Activated CD4-positive, alpha-beta memory T cell treated with anti-CD3 and anti-CD28 coated beads for 36 hours (primary cell): ENCODE measurements at regions of chr17 and their contacts with region 1.

Region 1: GRCh38 chr17:42997984-42998938 is at the start of gene RPL27:
- DNase-seq: peak; percentile 99
- H3K4me3 Mint-ChIP-seq: peak within 1 kb of the TSS; percentile 98
- H3K27ac Mint-ChIP-seq: peak within 1 kb of the TSS; percentile 98
- H3K4me1 Mint-ChIP-seq: peaks cover 30% of the 10 kb centered on the region
- H3K27me3 Mint-ChIP-seq: no peaks in the 10 kb centered on the region
- total RNA-seq, gene RPL27: 1,552 to 1,589 TPM

Region 2: DNA sequence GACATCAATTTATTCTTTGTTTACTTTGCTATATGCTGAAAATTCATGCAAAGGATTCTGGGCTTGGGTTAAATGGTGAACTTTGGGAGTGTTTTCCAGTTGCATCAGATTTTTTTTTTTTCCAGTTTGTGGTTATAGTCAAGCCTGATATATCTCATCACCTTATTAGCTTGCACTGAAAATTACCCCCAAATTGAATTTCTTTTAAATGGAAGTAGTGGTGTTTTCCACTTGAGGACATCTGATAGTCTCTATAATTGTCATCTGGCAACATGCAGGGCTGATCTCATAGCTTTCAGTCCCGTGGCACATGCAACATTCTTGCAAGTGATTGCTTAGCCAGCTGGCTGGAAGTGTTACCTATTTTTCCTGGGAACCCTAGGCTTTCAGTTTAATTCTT is 1984.7 kb before region 1 on chr17:
- CTCF ChIA-PET with region 1: no interaction called
- POLR2A ChIA-PET with region 1: no interaction called
- intact Hi-C with region 1: no loop called
- DNase-seq: no peak
- H3K4me3 Mint-ChIP-seq: no peak overlapping the region
- H3K27ac Mint-ChIP-seq: no peak overlapping the region
- H3K4me1 Mint-ChIP-seq: no peaks in the 10 kb centered on the region
- H3K27me3 Mint-ChIP-seq: no peaks in the 10 kb centered on the region

Region 3: DNA sequence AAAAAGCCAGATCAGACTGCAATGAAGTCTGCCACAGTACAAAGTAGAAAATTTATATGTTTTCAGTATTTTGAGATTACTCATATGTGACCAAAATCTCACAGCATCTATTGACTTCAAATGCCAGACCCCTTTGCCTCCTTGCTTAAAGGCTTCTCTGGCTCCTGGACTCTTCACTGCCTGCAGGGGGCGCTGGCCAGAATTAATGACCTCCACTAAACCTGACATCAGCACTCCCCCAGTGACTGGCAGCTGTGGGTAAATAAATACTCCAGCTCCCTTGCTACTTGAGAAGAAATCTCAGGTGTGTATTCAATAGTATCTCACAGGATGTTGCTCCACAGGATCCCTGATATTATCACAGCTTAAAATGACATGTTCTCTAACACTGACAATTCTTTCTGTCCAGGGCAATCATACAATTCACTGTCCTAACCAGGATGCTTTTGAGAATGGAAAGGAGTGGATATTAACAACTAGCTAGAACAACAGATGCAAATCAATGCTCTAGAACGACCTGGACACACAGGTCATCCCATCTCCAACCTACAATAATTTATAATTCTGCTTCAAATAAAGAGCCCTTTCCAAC is 178.2 kb before region 1 on chr17:
- CTCF ChIA-PET with region 1: interaction called, 4 read pairs
- POLR2A ChIA-PET with region 1: interaction called, 10 read pairs
- intact Hi-C with region 1: no loop called
- DNase-seq: peak; percentile 79
- H3K4me3 Mint-ChIP-seq: no peak overlapping the region
- H3K27ac Mint-ChIP-seq: no peak overlapping the region
- H3K4me1 Mint-ChIP-seq: peaks cover 24% of the 10 kb centered on the region
- H3K27me3 Mint-ChIP-seq: no peaks in the 10 kb centered on the region

Region 4: GRCh38 chr17:42843358-42843934 is 154.8 kb before region 1 on chr17:
- CTCF ChIA-PET with region 1: interaction called, 25 read pairs
- POLR2A ChIA-PET with region 1: interaction called, 3 read pairs
- intact Hi-C with region 1: no loop called
- DNase-seq: peak; percentile 17
- H3K4me3 Mint-ChIP-seq: no peak overlapping the region
- H3K27ac Mint-ChIP-seq: no peak overlapping the region
- H3K4me1 Mint-ChIP-seq: peaks cover 16% of the 10 kb centered on the region
- H3K27me3 Mint-ChIP-seq: no peaks in the 10 kb centered on the region

Region 5: GRCh38 chr17:42908872-42909700 is 89.2 kb before region 1 on chr17:
- CTCF ChIA-PET with region 1: no interaction called
- POLR2A ChIA-PET with region 1: no interaction called
- intact Hi-C with region 1: no loop called
- DNase-seq: no peak
- H3K4me3 Mint-ChIP-seq: no peak overlapping the region
- H3K27ac Mint-ChIP-seq: no peak overlapping the region
- H3K4me1 Mint-ChIP-seq: no peaks in the 10 kb centered on the region
- H3K27me3 Mint-ChIP-seq: peaks cover 9% of the 10 kb centered on the region

Region 6: DNA sequence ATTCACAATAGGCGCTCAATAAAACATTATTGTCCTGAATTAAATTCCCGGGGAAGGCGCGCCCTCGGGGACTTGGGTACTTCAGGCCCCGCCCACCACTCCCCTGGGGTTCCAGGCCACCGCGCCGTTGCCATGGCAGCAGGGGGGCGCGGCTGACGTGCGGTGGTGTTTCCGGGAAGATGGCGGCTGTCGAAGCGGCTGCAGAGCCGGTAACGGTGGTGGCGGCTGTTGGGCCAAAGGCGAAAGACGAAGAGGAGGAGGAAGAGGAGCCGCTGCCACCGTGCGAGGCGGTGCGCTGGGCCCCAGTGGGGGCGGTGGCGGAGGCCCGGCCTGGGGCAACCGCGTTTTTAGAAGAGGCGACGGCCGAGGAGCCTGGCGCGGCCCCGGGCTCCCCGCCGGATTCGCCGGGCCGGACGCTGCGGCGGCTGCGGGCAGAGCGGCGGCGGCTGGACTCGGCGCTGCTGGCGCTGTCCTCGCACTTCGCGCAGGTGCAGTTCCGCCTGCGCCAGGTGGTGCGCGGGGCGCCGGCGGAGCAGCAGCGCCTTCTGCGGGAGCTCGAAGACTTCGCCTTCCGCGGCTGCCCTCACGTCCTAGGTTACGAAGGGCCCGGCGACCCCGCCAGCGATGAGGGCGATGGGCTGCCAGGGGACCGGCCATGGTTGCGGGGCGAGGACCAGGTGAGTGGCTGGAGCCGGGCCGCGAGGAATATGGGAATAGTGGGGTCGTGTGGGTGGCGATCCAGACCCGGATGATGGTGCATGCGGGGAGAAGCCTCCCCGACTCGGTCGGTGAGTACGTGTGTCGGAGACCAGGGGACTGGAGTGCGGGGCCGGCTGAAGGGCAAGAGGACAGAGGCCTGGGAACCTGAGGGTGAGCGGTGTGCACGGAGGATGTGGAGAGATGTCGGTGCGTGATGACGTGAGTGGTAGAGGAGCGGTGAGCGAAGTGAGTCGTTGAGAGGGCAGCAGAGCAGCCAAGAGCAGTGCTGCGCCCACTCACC is 17.6 kb before region 1 on chr17 and contains the start of gene RUNDC1:
- CTCF ChIA-PET with region 1: interaction called, 17 read pairs
- POLR2A ChIA-PET with region 1: interaction called, 7 read pairs
- intact Hi-C with region 1: loop called (anchors 1 kb)
- DNase-seq: peak; percentile 94
- H3K4me3 Mint-ChIP-seq: peak within 1 kb of the TSS; percentile 99
- H3K27ac Mint-ChIP-seq: peak within 1 kb of the TSS; percentile 88
- H3K4me1 Mint-ChIP-seq: peaks cover 28% of the 10 kb centered on the region
- H3K27me3 Mint-ChIP-seq: no peaks in the 10 kb centered on the region
- total RNA-seq, gene RUNDC1: 10.0 to 11.5 TPM

Region 7: DNA sequence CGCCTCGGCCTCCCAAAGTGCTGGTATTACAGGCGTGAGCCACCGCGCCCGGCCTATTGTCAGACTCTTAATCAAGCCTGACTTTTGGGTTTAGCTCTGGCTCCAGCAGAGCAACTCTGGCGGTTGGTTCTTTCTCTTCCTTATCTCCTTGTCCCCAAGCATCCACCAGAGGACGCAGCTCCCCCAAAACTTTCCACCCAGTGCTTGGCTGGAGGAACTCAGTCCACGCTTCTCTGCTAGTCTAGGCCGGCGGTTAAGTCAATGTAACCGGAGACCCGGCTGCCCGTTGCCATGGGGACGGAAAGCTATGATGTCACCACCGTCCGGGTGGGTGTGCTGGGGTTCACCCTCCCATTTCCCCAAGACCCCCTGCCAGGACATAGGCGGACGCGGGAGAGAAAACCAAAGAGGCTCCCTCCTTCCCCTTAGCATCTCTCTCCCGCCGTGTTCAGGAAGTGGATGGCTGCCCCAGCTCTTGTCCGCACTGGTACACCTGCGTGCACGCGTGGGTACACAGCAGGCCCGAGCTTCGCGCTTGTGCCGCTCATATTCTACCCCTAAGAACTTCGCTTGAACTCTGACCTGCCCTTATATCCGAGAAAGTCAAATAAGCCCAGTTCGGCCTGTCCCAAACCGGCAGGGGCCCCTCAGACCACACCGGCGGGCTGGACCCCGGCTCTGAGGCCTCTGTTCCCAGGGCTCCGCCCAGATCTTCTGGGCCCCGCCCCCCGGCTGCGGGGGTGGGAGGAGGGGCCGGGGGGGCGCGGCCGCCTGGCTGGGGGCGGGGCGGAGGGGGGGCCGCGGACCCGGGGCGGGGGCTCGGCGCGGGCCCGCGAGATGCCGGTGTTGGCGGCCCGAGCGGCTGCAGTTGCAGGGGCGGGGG is 26.4 kb after region 1 on chr17 and contains the start of gene RND2:
- CTCF ChIA-PET with region 1: interaction called, 8 read pairs
- POLR2A ChIA-PET with region 1: interaction called, 13 read pairs
- intact Hi-C with region 1: no loop called
- DNase-seq: peak; percentile 88
- H3K4me3 Mint-ChIP-seq: peak within 1 kb of the TSS; percentile 74
- H3K27ac Mint-ChIP-seq: peak within 1 kb of the TSS; percentile 21
- H3K4me1 Mint-ChIP-seq: peaks cover 21% of the 10 kb centered on the region
- H3K27me3 Mint-ChIP-seq: no peaks in the 10 kb centered on the region
- total RNA-seq, gene RND2: 0.07 TPM in 1 of 2 experiments, not detected in the other

Region 8: DNA sequence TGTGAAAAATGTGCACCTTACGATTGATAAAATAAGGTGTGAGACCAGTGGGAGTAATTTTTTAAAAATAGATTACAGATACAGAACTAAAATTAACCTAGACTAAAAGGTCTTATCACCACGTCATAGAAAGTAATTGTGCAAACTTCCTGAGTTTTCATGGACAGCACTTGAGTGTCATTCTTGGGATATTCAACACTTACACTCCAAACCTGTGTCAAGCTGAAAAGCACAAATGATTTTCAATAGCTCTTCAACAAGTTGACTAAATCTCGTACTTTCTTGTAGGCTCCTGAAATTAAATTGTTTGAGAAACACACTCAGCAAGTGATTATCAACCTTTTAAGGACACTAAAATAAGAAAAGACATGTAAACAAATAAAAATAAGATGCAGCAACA is 106.4 kb after region 1 on chr17:
- CTCF ChIA-PET with region 1: no interaction called
- POLR2A ChIA-PET with region 1: no interaction called
- intact Hi-C with region 1: no loop called
- DNase-seq: no peak
- H3K4me3 Mint-ChIP-seq: no peak overlapping the region
- H3K27ac Mint-ChIP-seq: no peak overlapping the region
- H3K4me1 Mint-ChIP-seq: no peaks in the 10 kb centered on the region
- H3K27me3 Mint-ChIP-seq: no peaks in the 10 kb centered on the region

Region 9: DNA sequence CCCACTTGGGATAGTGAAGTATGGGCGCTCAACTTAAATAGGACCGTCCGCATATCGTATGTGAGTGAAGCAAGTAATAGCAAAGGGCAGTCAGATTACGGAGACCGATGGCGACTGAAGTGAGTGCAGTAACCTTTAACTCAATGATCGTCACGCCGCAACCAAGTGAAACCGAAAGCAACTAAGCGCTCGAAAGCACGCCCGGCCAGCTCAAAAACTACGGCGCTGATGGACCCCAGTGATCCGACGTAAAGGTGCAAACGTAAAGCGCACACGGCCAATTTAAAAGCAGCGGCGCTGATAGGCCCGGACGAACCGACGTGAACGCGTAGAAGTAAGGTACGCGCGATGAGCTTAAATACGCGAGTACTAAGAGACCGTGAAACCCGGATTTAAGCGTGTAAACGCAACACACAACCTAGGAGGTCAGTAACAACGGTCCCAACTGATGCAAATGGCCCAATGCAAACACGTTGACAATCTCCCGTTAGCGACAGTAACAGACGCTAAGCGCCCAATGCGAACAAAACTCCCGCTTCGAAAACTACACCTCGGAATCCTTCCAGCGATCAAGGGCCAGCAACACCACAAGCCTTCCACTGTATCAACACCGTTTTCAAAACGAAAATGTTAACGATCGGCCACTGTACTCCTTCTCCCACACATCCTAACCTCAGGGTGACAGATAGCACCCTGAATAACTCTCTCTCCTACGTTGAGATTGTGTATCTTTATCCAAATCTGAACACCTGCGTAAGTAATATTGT is 362.7 kb after region 1 on chr17:
- CTCF ChIA-PET with region 1: no interaction called
- POLR2A ChIA-PET with region 1: interaction called, 13 read pairs
- intact Hi-C with region 1: no loop called
- DNase-seq: peak; percentile 93
- H3K4me3 Mint-ChIP-seq: peak overlapping the region; percentile 86
- H3K27ac Mint-ChIP-seq: peak overlapping the region; percentile 99
- H3K4me1 Mint-ChIP-seq: peaks cover 29% of the 10 kb centered on the region
- H3K27me3 Mint-ChIP-seq: peaks cover 11% of the 10 kb centered on the region